ENCODE measurements at regions of chr16 and their contacts with region 1.

Region 1: DNA sequence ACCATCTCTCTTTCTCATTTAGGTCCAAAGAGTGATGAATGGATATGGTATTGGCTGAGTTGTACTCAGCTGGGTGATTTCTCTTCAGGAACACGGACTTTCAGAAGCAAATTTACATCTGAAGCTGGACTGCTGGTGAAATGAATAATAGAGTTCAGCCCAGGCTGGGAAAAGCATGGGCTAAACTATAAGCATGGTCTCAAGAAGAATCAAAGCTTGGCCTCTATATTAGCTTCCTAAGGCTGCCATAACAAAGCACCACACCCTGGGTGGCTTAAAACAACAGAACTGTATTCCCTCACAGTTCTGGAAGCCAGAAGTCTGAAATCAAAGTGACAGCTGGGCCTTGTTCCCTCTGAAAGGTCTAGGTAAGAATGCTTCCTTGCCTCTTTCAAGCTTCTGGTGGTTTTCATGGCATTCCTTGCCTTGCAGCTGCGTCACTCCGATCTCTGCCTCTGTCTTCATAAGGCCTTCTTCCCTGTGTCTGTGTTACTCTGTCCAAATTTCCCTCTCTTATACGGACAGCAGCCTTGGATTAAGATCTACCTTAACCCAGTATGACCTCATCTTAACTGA is 89.8 kb upstream of the CES5A start:
- DNase-seq: peak in 1 of 2 experiments; percentile 10
- H3K4me3 ChIP-seq: no peak overlapping the region
- H3K27ac ChIP-seq: no peak overlapping the region
- H3K4me1 ChIP-seq: peaks cover 34% of the 10 kb centered on the region
- H3K27me3 ChIP-seq: no peaks in the 10 kb centered on the region
- CTCF ChIP-seq: no peak

Region 2: DNA sequence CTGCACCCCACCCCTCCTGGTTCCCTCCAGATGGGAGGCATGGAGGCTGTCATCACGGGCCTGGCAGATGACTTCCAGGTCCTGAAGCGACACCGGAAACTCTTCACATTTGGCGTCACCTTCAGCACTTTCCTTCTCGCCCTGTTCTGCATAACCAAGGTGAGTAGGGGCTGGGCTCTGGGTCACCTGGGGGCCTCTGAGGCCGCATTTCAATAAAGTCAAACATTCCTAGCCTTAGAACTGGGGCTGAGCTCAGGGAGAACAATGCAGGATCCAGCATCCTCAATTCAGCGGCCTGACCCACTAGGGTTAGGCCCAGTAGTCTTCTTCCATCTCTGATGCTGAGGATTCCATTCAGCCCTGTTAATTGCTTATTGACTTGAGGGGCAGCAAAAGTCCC is 267.1 kb before region 1 on chr16:
- CTCF ChIA-PET with region 1: no interaction called
- POLR2A ChIA-PET with region 1: no interaction called
- intact Hi-C with region 1: no loop called
- DNase-seq: no peak
- H3K4me3 ChIP-seq: no peak overlapping the region
- H3K27ac ChIP-seq: no peak overlapping the region
- H3K4me1 ChIP-seq: peaks cover 16% of the 10 kb centered on the region
- H3K27me3 ChIP-seq: no peaks in the 10 kb centered on the region
- CTCF ChIP-seq: no peak

Region 3: DNA sequence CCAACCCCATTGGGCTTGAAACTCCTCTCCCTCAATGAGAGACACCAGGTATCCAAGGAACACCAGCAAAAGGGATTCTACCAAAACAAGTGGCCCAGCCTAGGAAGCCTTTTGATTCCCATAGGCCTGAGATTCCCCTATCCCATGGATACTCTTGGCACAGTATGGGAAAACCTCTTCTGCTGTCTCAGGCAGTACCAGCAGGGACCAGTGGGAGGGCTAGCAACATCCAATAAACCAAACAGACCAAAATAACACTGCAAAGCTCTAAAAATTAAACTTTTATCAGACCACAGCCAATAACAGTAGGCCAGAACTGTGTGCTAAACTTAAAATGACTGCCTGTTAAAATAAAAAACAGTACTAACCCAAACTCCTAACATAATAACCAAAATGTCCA is 64.0 kb after region 1 on chr16:
- CTCF ChIA-PET with region 1: no interaction called
- POLR2A ChIA-PET with region 1: no interaction called
- intact Hi-C with region 1: no loop called
- DNase-seq: no peak
- H3K4me3 ChIP-seq: no peak overlapping the region
- H3K27ac ChIP-seq: no peak overlapping the region
- H3K4me1 ChIP-seq: no peaks in the 10 kb centered on the region
- H3K27me3 ChIP-seq: peaks cover 11% of the 10 kb centered on the region
- CTCF ChIP-seq: no peak

Region 4: DNA sequence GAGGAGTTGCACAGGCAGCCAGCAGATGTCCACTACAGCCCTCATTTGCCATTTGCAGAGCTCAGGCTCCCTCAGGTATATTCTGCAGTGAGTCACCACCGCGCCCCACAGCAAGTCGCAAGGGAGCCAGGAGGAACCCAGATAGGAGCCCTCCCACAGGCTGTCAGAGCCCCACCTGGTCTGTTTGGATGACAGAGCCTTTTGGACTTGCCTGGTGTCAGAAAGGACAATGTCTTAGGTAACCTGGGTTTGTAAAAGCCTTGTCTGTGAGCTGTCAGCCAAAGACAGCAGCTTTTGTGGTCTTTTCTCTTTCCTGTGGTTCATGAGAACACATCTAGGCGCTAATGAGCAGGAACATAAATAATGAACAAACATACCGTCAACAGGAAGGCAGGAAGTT is 297.1 kb after region 1 on chr16:
- CTCF ChIA-PET with region 1: no interaction called
- POLR2A ChIA-PET with region 1: interaction called, 28 read pairs
- intact Hi-C with region 1: no loop called
- DNase-seq: peak; percentile 76 to 81
- H3K4me3 ChIP-seq: no peak overlapping the region
- H3K27ac ChIP-seq: no peak overlapping the region
- H3K4me1 ChIP-seq: peaks cover 26% of the 10 kb centered on the region
- H3K27me3 ChIP-seq: no peaks in the 10 kb centered on the region
- CTCF ChIP-seq: no peak